H1 (cell line): ENCODE measurements at regions of chr9 and their contacts with region 1.

Region 1: GRCh38 chr9:124450241-124450924 is at the start of gene ADGRD2:
- DNase-seq: peak; percentile 70 to 96
- H3K4me3 ChIP-seq: peak within 1 kb of the TSS; percentile 20 to 63 (median 42)
- H3K27ac ChIP-seq: no peak within 1 kb of the TSS; the same call in 1 of the 2 replicates
- H3K4me1 ChIP-seq: peaks cover 0 to 20% (median 14%) of the 10 kb centered on the region in 4 experiments; a peak in 6 of 7 replicates
- H3K27me3 ChIP-seq: peaks cover 10 to 33% (median 25%) of the 10 kb centered on the region in 4 experiments
- CTCF ChIP-seq: no peak
- EP300 ChIP-seq: no peak
- POLR2A ChIP-seq: peak in 1 of 2 experiments; percentile 69; a peak in 2 of 3 replicates
- RAD21 ChIP-seq: no peak; a peak in 1 of 4 replicates
- total RNA-seq, gene ADGRD2: 1.1 and 1.4 TPM in 2 replicates

Region 2: DNA sequence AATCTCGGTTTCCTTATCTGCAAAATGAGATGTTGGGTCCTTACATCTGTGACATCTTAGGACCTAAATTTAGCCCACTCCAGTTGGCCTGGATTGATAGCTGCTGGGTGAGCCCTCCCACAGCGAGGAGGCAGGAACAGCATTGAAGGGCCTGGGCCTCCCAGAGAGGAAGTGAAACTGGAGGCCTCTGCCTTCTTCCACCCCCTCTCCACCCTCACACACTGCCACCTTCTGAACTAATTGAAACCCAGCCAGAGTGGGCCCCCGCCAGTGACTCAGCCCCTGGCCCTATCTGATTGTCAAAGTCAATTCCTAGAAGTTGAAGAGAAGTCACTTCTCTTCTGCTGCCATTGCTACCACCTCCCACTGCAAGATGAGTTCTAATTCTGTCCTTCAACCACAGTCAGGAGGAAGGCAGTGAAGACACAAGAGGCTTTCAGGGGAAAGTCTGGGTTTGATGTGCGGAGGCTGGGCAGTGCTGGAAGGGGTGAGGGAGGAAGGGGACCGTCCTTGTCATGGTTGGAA is 247.9 kb before region 1 on chr9:
- CTCF ChIA-PET with region 1: no interaction called
- POLR2A ChIA-PET with region 1: no interaction called
- DNase-seq: no peak
- H3K4me3 ChIP-seq: no peak overlapping the region
- H3K27ac ChIP-seq: no peak overlapping the region
- H3K4me1 ChIP-seq: no peaks in the 10 kb centered on the region
- H3K27me3 ChIP-seq: no peaks in the 10 kb centered on the region; a peak in 1 of 7 replicates
- CTCF ChIP-seq: no peak
- EP300 ChIP-seq: no peak
- POLR2A ChIP-seq: no peak
- RAD21 ChIP-seq: no peak

Region 3: DNA sequence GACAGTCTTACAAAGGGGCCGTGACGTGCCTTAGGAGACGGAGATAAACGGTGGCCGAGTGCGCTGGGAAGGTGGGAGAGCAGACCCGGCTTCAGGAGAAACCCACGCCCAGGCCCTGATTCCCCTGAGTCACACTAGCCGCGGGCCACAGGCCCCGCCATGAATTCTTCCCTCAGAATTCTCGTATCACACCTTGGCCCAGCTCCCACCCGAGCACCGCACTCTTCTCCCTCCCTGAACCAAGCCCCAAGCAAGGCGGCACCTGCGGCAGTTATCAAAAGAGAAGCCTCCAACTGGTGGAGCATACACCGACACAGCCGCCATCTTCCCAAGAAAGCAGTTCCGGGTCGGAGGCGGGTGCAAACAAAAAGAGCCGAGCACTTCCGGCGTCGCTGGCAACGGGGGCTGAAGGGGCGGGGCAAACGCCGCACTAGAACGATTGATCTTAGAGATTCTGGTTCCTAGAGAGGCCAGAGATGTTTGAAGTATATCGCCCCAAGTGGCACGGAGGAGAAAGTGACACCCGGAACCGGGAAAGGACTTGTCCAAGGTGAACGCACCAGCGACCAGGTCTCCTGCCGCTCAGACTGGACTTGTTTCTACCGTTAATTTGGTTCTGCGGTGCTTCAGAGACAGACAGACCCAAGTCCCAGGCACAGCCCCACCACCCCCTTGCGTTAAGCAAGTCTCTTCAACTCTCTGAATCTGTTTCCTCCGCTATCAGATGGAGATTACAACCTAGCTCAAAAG is 35.1 kb before region 1 on chr9 and contains the start of gene PSMB7:
- CTCF ChIA-PET with region 1: interaction called, 21 read pairs
- POLR2A ChIA-PET with region 1: no interaction called
- DNase-seq: peak; percentile 93 to 99
- H3K4me3 ChIP-seq: peak within 1 kb of the TSS; percentile 70 to 97 (median 90)
- H3K27ac ChIP-seq: peak within 1 kb of the TSS; percentile 85
- H3K4me1 ChIP-seq: peaks cover 0 to 2% (median 2%) of the 10 kb centered on the region in 4 experiments; a peak in 6 of 7 replicates
- H3K27me3 ChIP-seq: no peaks in the 10 kb centered on the region
- CTCF ChIP-seq: peak; percentile 71 to 86 (median 77)
- EP300 ChIP-seq: peak in 1 of 2 experiments; percentile 88; a peak in 1 of 3 replicates
- POLR2A ChIP-seq: peak in 1 of 2 experiments; percentile 93; a peak in 2 of 3 replicates
- RAD21 ChIP-seq: no peak
- total RNA-seq, gene PSMB7: 219 and 222 TPM in 2 replicates

Region 4: GRCh38 chr9:124475158-124475867 is 24.9 kb after region 1 on chr9:
- CTCF ChIA-PET with region 1: interaction called, 35 read pairs
- POLR2A ChIA-PET with region 1: interaction called, 3 read pairs
- DNase-seq: no peak
- H3K4me3 ChIP-seq: no peak overlapping the region
- H3K27ac ChIP-seq: no peak overlapping the region
- H3K4me1 ChIP-seq: peaks cover 3 to 28% (median 21%) of the 10 kb centered on the region in 4 experiments
- H3K27me3 ChIP-seq: peaks cover 8 to 35% (median 32%) of the 10 kb centered on the region in 4 experiments
- CTCF ChIP-seq: peak in 2 of 3 experiments; percentile 64 to 69; a peak in 3 of 4 replicates
- EP300 ChIP-seq: no peak
- POLR2A ChIP-seq: no peak
- RAD21 ChIP-seq: peak; percentile 78 to 85

Region 5: GRCh38 chr9:124480621-124480981 is 30.2 kb after region 1 on chr9:
- CTCF ChIA-PET with region 1: interaction called, 35 read pairs
- POLR2A ChIA-PET with region 1: interaction called, 3 read pairs
- DNase-seq: peak; percentile 44 to 80
- H3K4me3 ChIP-seq: no peak overlapping the region
- H3K27ac ChIP-seq: no peak overlapping the region
- H3K4me1 ChIP-seq: peaks cover 4 to 36% (median 30%) of the 10 kb centered on the region in 4 experiments
- H3K27me3 ChIP-seq: peaks cover 8 to 40% (median 38%) of the 10 kb centered on the region in 4 experiments
- CTCF ChIP-seq: peak in 2 of 3 experiments; percentile 71 to 79; a peak in 3 of 4 replicates
- EP300 ChIP-seq: no peak
- POLR2A ChIP-seq: no peak
- RAD21 ChIP-seq: peak; percentile 56 to 60